Heart left ventricle (tissue), 16 donors: ENCODE measurements at regions of chr10 and their contacts with region 1.

Region 1: GRCh38 chr10:70146489-70147258 is at the start of gene TYSND1:
- DNase-seq: peak; percentile 96 to 98 (median 97)
- ATAC-seq: peak; percentile 91 to 97 (median 94)
- H3K4me3 ChIP-seq: peak within 1 kb of the TSS; percentile 38 to 97 (median 80)
- H3K27ac ChIP-seq: peak within 1 kb of the TSS; percentile 73 to 95 (median 90)
- H3K4me1 ChIP-seq: peaks cover 0 to 33% (median 15%) of the 10 kb centered on the region in 12 donors
- H3K27me3 ChIP-seq: no peaks in the 10 kb centered on the region
- CTCF ChIP-seq: peak; percentile 52 to 89 (median 68)
- POLR2A ChIP-seq: peak; percentile 13 to 88
- total RNA-seq, gene TYSND1: 3.9 to 9.6 (median 5.4) TPM

Region 2: GRCh38 chr10:69663369-69663947 is 483.2 kb before region 1 on chr10:
- intact Hi-C with region 1: no loop called
- DNase-seq: no peak
- ATAC-seq: no peak
- H3K4me3 ChIP-seq: no peak overlapping the region
- H3K27ac ChIP-seq: no peak overlapping the region
- H3K4me1 ChIP-seq: no peaks in the 10 kb centered on the region
- H3K27me3 ChIP-seq: peaks cover 0 to 18% (median 2%) of the 10 kb centered on the region in 9 donors
- CTCF ChIP-seq: no peak
- POLR2A ChIP-seq: no peak

Region 3: DNA sequence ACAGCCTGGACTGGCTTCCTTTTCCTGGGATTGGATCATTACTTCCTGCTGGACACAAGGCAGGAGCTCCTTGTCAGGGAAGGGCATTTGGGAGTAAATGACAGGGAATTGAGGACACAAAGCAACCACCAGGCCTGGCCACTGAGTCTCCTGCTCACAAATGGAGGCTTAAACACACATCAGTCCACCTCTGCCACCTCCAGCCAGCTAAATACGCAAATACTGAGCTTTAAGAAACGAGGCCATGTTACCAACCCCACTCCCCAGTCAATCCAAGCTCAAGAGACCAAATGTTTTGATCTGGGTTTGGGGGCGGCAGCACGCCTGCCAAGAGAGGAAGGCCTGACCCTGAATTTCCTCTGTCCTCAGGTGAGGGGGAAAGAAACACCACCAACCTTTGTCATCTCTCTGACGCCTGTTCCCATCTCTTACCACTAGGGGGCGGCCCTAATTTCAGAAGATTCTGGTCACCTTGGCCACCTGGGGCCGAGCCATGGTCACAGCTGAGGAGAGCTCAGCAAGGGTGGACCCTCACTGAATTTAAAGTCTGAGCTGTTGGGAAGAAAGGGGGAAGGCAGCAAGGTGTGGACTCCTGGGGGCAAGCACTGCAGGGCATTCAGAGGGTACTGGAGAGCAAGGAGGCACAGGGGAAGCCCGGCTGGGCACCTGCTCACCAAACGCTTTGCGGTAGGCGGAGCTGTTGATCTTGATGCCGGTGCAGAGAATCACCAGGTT is 30.6 kb before region 1 on chr10:
- intact Hi-C with region 1: loop called in 2 of 10 experiments (anchors 2 kb)
- DNase-seq: peak in 3 of 5 donors; percentile 29 to 47 (median 39)
- ATAC-seq: peak in 3 of 4 donors; percentile 53 to 57 (median 55)
- H3K4me3 ChIP-seq: no peak overlapping the region
- H3K27ac ChIP-seq: no peak overlapping the region
- H3K4me1 ChIP-seq: peaks cover 0 to 15% (median 0%) of the 10 kb centered on the region in 12 donors
- H3K27me3 ChIP-seq: no peaks in the 10 kb centered on the region
- CTCF ChIP-seq: peak; percentile 70 to 92 (median 84)
- POLR2A ChIP-seq: no peak

Region 4: GRCh38 chr10:70169649-70170364 is 23.1 kb after region 1 on chr10:
- intact Hi-C with region 1: loop called in 1 of 10 experiments (anchors 1 kb)
- DNase-seq: peak in 1 of 5 donors; percentile 12
- ATAC-seq: peak; percentile 12 to 53 (median 46)
- H3K4me3 ChIP-seq: peak overlapping the region; percentile 68 to 98 (median 84)
- H3K27ac ChIP-seq: peak overlapping the region; percentile 83 to 95 (median 92)
- H3K4me1 ChIP-seq: peaks cover 0 to 67% (median 31%) of the 10 kb centered on the region in 12 donors
- H3K27me3 ChIP-seq: no peaks in the 10 kb centered on the region
- CTCF ChIP-seq: no peak
- POLR2A ChIP-seq: no peak